Stomach (tissue), 19 donors: ENCODE measurements at regions of chr14 and their contacts with region 1.

Region 1: DNA sequence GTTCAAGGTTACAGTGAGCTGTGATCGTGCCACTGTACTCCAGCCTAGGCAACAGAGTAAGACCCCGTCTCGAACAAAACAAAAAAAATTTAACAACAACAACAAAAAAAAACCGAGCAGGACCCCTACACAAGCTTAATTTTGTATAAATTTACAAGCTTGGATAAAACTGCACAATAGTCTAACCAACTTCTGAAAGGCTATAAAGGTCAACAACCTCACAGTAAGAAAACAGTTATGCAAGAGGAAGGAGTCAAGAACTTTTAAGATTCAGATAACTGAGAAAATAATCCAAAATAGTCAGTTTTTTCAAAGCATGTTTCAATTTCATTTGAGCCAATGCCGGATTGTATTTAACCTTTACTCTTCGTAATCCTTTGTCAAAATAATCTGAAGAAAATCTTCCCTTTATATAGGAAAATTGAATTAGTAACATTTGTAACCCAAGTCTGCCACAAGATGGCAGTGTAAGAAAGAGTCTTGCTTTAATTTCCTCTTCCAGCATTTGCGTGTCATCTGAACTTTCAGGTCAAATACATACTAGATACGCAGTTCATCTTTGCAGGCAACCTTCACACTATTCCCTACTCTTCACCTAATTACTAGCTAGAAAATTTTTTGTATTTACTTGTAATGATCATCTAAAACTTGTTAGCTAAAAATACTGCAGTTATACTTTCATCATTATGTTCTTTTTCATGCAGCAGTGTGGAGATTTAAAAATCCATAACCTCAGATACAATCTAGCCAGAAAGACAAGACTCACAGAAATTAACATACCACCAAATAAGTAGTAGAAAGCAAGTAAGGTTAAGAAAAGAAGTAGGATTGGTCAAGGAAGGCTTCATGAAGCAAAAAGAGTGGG is 5.8 kb downstream of the CCNB1IP1 start:
- DNase-seq: peak in 1 of 2 donors; percentile 85
- H3K4me3 ChIP-seq: no peak overlapping the region
- H3K27ac ChIP-seq: peak overlapping the region in 3 of 5 donors; percentile 24 to 56 (median 34)
- H3K4me1 ChIP-seq: peaks cover 1 to 43% (median 21%) of the 10 kb centered on the region in 4 donors
- H3K27me3 ChIP-seq: no peaks in the 10 kb centered on the region
- CTCF ChIP-seq: peak in 5 of 7 experiments; percentile 45 to 80 (median 71)
- EP300 ChIP-seq: no peak
- POLR2A ChIP-seq: no peak

Region 2: DNA sequence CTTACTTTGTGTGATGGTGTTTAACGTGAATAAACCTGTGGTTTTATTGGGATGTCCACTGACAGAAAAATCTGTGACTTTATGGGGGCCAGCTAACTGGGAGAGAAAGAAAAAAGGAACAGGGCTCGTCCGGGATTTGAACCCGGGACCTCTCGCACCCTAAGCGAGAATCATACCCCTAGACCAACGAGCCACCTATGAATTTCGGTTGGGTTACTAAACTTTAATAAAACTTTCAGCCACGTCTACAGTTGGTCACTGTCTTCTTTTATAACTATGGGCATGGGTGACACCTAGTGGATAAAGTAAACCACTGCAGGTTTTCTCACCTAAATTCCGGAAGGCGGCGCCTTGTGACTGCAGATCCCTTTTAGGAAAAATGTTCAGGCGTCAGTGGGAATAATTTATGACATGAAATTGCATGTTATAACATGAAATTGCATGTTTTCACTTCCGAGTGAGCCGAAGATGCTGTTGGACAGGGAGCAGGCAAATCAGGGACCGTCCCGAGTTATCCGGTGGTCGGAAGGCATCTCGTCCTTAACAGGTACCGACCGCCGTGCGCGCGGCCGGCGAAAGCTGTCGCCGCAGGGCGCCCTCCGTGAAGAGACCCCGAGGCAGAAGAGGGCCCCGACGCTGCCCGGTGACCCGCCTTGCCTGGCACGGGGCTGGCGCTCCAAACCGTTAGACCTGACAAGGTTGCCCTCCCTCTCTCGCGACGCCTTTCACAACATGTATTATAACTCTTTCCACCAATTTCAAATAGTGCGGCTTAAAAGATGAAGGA is 282.2 kb after region 1 on chr14:
- intact Hi-C with region 1: loop called (anchors 5 kb)
- DNase-seq: peak; percentile 76 to 93
- H3K4me3 ChIP-seq: peak overlapping the region; percentile 87 to 94 (median 91)
- H3K27ac ChIP-seq: peak overlapping the region; percentile 67 to 89 (median 80)
- H3K4me1 ChIP-seq: peaks cover 9 to 51% (median 37%) of the 10 kb centered on the region in 4 donors
- H3K27me3 ChIP-seq: no peaks in the 10 kb centered on the region
- CTCF ChIP-seq: peak in 5 of 7 experiments; percentile 74 to 98 (median 91)
- EP300 ChIP-seq: no peak
- POLR2A ChIP-seq: no peak

Region 3: DNA sequence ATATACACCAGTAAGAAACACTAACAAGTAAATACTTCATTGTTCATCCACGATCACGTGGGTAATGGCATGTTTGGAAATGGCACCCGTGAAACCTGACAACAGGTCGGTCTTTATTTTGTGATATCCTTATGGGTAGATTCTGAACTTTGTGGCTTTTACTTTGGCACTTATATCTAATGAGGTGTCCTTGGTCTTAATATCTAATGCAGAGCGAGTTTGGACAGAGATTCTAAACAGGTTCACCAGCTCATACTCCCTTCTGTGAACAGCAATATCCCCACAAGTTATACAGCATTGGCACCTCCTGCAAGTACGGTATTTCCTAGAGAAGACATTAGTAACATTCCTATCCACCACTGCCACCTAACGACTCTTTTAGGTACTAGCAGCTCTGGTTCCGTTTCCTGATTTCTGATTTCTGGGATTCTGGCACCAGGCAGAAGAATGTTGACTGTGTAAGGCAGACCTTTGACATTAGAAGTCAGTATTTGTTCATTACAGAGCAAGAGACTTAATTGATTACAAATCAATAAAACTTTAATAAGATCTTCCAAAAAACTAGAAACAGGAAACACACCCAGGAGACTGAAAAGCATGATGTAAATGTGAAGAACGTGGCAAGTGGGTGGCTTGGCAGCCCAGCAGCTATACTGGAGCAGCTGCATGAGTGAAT is 363.7 kb after region 1 on chr14:
- intact Hi-C with region 1: loop called (anchors 10 kb)
- DNase-seq: peak; percentile 45 to 91
- H3K4me3 ChIP-seq: no peak overlapping the region
- H3K27ac ChIP-seq: peak overlapping the region in 4 of 5 donors; percentile 9 to 37 (median 27)
- H3K4me1 ChIP-seq: peaks cover 24 to 54% (median 44%) of the 10 kb centered on the region in 4 donors
- H3K27me3 ChIP-seq: no peaks in the 10 kb centered on the region
- CTCF ChIP-seq: peak in 5 of 7 experiments; percentile 79 to 92 (median 85)
- EP300 ChIP-seq: no peak
- POLR2A ChIP-seq: no peak